Breast epithelium (tissue), 4 donors: ENCODE measurements at regions of chr12 and their contacts with region 1.

Region 1: DNA sequence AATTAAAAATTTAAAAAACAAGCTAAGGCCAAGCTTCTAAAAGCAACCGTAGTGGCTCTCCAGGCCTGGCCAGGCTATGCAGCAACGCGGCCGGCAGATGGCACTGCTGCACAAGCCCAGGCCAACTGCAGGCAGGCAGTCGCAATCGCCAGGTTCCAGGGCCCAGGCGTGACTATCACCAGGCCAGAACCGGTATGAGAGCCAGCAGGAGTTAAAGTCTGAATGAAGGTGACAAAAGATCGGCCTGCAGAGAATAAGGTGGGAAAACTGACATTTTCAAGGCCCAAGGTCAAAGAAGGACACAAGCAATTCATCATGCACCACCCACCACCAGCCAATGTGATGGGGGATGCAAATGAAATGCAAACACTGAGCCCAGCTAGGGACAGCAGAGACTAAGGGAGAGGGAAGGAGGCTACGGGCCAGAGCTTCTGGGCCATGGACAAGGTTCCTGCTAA is 43.6 kb upstream of the ANO2 start:
- DNase-seq: peak; percentile 50 to 78
- H3K4me3 ChIP-seq: no peak overlapping the region
- H3K27ac ChIP-seq: no peak overlapping the region
- H3K4me1 ChIP-seq: no peaks in the 10 kb centered on the region
- H3K27me3 ChIP-seq: no peaks in the 10 kb centered on the region
- CTCF ChIP-seq: peak; percentile 47 to 94 (median 90)
- POLR2A ChIP-seq: no peak

Region 2: DNA sequence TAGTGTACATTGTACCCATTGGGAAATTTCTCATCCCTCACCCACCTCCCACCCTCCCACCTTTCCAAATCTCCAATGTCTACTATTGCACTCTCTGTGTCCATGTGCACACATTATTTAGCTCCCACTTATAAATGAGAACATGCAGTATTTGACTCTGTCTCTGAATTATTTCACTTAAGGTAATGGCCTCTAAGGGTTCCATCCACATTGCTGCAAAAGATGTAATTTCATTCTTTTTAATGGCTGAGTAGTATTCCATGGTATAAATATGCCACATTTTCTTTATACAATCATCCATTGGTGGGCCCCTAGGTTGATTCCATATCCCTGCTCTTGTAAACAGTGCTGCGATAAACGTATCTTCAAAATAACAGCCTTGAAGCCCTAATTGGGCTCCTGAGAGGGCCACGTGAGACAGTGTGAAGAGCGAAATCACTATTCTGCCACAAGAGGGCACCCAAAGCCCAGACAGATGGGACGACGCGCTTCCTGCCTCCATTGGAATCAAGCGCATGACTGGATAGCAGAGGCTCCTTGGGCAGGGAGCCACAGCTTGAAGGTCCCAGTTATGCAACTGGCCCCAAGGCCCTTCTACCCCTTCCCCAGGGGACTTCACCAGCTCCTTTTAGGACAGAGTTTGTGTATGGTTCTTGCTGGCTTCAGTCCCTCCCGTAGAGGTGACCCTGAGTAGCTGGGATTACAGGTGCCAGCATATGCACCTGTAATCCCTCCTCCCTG is 434.7 kb after region 1 on chr12:
- intact Hi-C with region 1: loop called (anchors 5 kb)
- DNase-seq: peak; percentile 73 to 76
- H3K4me3 ChIP-seq: no peak overlapping the region
- H3K27ac ChIP-seq: no peak overlapping the region
- H3K4me1 ChIP-seq: peaks cover 0 to 4% of the 10 kb centered on the region in 2 donors
- H3K27me3 ChIP-seq: no peaks in the 10 kb centered on the region
- CTCF ChIP-seq: peak; percentile 74 to 91 (median 91)
- POLR2A ChIP-seq: no peak

Region 3: GRCh38 chr12:6524648-6525047 is 536.0 kb after region 1 on chr12:
- intact Hi-C with region 1: no loop called
- DNase-seq: no peak
- H3K4me3 ChIP-seq: no peak overlapping the region
- H3K27ac ChIP-seq: no peak overlapping the region
- H3K4me1 ChIP-seq: peaks cover 0 to 4% of the 10 kb centered on the region in 2 donors
- H3K27me3 ChIP-seq: no peaks in the 10 kb centered on the region
- CTCF ChIP-seq: no peak
- POLR2A ChIP-seq: no peak